K562 (cell line): ENCODE measurements at regions of chr6 and their contacts with region 1.

Region 1: DNA sequence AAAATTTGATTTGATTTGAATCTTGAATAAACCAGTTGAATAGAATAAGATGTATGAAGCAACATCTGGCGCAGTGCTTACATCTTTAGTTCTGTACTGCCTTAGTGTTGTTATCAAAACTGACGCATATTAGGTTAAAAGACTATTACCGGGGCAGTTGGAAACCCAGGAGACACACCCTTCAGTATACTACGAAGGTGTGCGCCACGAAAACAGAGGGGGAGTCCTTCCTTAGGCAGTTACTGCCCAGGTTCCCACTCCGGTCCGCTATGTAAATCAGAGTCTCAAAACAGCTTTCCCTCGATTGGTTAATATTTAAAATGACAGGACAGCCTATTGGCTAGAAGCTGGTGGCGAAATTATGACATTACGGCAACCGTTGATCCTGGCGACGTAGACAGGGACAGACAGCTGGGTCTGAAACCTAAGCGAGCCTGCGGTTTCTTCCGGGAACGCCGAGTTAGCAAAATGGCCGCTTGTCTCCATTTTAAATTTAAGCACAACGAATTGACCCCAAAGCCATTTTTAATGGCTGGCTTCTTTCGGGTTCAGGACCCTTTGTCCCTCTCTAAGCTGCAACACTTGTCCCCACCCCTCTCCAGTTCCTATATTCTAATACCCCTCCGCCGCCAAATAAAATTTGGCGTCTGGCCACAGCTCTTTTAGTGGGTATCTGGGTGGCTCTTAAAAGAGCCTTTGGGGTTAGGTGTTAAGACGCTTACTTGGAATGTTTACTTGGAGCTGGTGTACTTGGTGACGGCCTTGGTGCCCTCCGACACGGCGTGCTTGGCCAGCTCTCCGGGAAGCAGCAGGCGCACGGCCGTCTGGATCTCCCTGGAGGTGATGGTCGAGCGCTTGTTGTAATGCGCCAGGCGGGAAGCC is 35.8 kb downstream of the HFE start:
- DNase-seq: peak; percentile 79 to 99 (median 86)
- ATAC-seq: peak; percentile 62
- H3K4me3 ChIP-seq: peak overlapping the region; percentile 72
- H3K27ac ChIP-seq: peak overlapping the region; percentile 95
- H3K4me1 ChIP-seq: peaks cover 3 to 7% of the 10 kb centered on the region in 2 experiments; a peak in 4 of 5 replicates
- H3K27me3 ChIP-seq: no peaks in the 10 kb centered on the region
- CTCF ChIP-seq: peak in 1 of 3 experiments; percentile 23; a peak in 1 of 6 replicates
- EP300 ChIP-seq: peak; percentile 99
- POLR2A ChIP-seq: no peak; the same call in none of the 2 replicates
- RAD21 ChIP-seq: 0 out of 4 replicates have a peak, but pooled peaks of 1 of the 2 experiments have one; percentile 6

Region 2: DNA sequence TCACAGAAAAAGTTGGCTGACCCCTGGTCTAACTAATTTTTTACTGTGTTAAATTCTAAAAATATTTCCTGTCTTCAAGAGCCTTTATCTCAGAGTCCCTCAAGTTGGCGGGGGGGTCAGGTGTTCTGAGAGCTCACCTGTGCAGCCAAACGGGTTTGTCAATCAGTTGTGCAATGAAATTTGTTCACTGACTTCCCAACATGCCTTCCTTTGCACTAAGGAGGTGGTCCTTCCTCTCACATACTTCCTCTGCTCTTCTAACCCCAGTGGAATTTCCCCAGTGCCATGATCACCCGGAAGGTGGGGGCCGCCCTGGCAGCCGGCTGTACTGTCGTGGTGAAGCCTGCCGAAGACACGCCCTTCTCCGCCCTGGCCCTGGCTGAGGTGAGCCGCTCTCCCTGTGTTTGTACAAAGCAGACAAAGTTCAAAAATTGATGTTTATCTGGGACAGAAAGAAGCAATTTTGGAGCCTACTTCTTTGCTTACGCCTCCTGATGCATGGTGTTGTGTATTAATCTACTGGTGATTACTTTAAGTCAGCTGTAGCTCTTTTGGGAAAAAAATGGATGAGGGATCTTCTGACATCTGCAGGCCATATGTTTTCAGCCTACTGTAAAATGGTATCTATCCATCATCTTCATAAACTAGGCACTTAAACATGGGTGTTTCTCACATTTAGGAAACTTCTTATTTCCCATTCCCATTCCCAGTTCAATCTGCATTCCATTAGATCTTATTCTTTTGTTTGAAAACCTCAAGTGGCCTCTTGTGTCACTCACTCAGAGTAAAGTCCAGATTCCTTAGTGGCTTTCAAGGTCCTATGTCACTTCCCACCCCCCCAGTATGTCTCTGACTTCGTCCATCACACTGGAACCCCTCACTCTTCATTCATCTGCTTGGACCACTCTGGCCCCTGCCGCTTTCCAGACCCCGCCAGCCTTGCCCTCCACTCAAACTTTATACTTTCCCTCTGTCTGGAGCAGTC is 1618.1 kb before region 1 on chr6:
- CTCF ChIA-PET with region 1: no interaction called
- POLR2A ChIA-PET with region 1: no interaction called
- in situ Hi-C with region 1: no loop called
- intact Hi-C with region 1: no loop called
- DNase-seq: no peak
- ATAC-seq: no peak; the same call in 2 of the 3 replicates
- H3K4me3 ChIP-seq: no peak overlapping the region
- H3K27ac ChIP-seq: no peak overlapping the region
- H3K4me1 ChIP-seq: peaks cover 0 to 3% of the 10 kb centered on the region in 2 experiments; a peak in 2 of 5 replicates
- H3K27me3 ChIP-seq: no peaks in the 10 kb centered on the region; a peak in 2 of 5 replicates
- CTCF ChIP-seq: no peak
- EP300 ChIP-seq: no peak
- POLR2A ChIP-seq: no peak
- RAD21 ChIP-seq: no peak

Region 3: GRCh38 chr6:26065952-26066380 is 57.1 kb before region 1 on chr6:
- CTCF ChIA-PET with region 1: interaction called, 4 read pairs
- POLR2A ChIA-PET with region 1: interaction called, 23 read pairs
- in situ Hi-C with region 1: no loop called
- intact Hi-C with region 1: loop called (anchors 2 kb)
- DNase-seq: peak; percentile 80 to 91 (median 84)
- ATAC-seq: peak; percentile 91
- H3K4me3 ChIP-seq: no peak overlapping the region
- H3K27ac ChIP-seq: peak overlapping the region; percentile 70
- H3K4me1 ChIP-seq: peaks cover under 1 to 6% of the 10 kb centered on the region in 2 experiments; a peak in 2 of 5 replicates
- H3K27me3 ChIP-seq: no peaks in the 10 kb centered on the region
- CTCF ChIP-seq: peak; percentile 89 to 98 (median 93)
- EP300 ChIP-seq: peak; percentile 32; the same call in 1 of the 2 replicates
- POLR2A ChIP-seq: no peak
- RAD21 ChIP-seq: peak; percentile 99

Region 4: DNA sequence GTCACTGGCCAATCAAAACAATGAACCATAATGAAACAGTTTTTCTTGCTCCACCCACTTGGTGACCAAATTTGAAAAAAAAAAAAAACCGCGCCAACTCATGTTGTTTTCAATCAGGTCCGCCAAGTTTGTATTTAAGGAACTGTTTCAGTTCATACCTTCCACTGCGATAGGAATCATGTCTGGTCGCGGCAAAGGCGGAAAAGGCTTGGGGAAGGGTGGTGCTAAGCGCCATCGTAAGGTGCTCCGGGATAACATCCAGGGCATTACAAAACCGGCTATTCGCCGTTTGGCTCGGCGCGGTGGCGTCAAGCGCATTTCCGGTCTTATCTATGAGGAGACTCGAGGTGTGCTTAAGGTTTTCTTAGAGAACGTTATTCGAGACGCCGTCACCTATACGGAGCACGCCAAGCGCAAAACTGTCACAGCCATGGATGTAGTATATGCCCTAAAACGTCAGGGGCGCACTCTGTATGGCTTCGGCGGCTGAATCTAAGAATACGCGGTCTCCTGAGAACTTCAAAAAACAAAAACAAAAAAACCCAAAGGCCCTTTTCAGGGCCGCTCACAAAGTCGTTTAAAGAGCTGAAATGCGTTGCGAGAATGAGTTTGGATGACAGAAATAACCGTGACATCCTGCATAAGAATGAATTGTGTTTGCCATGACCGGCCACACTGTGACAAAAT is 19.1 kb before region 1 on chr6:
- CTCF ChIA-PET with region 1: interaction called, 3 read pairs
- POLR2A ChIA-PET with region 1: interaction called, 155 read pairs
- in situ Hi-C with region 1: no loop called
- intact Hi-C with region 1: loop called (anchors 1 kb)
- DNase-seq: peak; percentile 78 to 98 (median 86)
- ATAC-seq: peak; percentile 91
- H3K4me3 ChIP-seq: peak overlapping the region; percentile 30
- H3K27ac ChIP-seq: peak overlapping the region; percentile 92
- H3K4me1 ChIP-seq: peaks cover 3 to 20% of the 10 kb centered on the region in 2 experiments; a peak in 3 of 5 replicates
- H3K27me3 ChIP-seq: no peaks in the 10 kb centered on the region
- CTCF ChIP-seq: peak; percentile 53 to 71 (median 61)
- EP300 ChIP-seq: peak; percentile 96
- POLR2A ChIP-seq: peak; percentile 100
- RAD21 ChIP-seq: peak; percentile 29 to 46; a peak in 3 of 4 replicates

Region 5: DNA sequence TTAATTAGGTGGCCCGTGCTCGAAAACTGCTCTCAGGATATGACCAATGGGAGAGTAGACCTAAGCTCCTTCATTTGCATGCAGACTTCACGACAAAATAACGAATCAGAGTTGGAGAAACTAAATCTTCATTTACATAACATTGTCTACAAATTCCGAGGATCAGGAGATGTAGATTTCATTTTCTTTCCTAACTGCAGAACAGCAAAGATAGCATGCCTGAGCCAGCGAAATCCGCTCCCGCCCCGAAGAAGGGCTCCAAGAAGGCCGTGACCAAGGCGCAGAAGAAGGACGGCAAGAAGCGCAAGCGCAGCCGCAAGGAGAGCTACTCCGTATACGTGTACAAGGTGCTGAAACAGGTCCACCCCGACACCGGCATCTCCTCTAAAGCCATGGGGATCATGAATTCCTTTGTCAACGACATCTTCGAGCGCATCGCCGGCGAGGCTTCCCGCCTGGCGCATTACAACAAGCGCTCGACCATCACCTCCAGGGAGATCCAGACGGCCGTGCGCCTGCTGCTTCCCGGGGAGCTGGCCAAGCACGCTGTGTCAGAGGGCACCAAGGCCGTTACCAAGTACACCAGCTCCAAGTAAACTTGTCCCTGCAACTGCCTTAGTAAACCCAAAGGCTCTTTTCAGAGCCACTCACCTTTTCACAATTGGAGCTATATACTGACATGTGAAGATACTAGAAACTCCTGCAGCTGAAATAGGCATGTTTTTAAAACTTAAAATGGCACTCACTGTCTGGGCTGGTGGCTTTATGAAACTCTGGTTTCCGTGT is 60.7 kb after region 1 on chr6:
- CTCF ChIA-PET with region 1: no interaction called
- POLR2A ChIA-PET with region 1: interaction called, 84 read pairs
- in situ Hi-C with region 1: no loop called
- intact Hi-C with region 1: no loop called
- DNase-seq: no peak
- ATAC-seq: no peak
- H3K4me3 ChIP-seq: no peak overlapping the region
- H3K27ac ChIP-seq: no peak overlapping the region
- H3K4me1 ChIP-seq: peaks cover 0 to 18% of the 10 kb centered on the region in 2 experiments; a peak in 4 of 5 replicates
- H3K27me3 ChIP-seq: no peaks in the 10 kb centered on the region
- CTCF ChIP-seq: no peak
- EP300 ChIP-seq: no peak
- POLR2A ChIP-seq: no peak
- RAD21 ChIP-seq: no peak

Region 6: DNA sequence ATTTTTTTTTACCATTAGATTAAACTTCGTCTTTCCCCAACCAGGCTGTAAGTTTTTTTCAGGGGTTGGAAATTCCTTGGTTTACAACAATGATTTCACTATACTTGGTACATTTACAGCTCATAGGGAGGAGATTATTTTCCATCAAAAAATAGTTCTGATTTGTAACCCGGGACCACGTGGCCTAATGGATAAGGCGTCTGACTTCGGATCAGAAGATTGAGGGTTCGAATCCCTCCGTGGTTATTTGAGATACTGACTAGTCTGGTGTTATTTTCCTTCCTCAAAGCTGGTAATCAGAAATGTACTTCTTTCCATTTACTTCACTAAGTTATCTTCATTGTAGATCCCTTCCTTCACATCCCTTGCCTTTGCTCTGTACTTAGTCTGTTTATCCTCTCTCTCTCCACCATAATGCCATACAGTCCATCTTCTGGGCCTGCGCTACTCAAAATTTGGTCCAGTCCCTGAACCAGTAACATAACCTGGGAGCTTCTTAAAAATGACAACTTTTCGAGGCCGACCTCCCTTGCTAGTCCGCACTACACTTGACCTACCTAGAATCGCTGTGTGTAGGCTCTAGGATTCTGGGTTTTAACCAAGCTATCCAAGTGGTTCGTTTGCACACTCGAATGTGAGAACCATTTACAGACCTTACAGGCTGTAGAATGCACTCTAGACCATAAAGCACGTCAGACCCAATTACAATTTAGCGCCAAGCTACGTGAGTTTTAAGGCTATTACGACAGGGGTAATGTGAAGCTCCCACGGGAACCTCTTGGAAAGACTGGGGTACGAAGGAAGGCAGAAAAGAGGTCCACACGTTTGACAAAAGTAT is 199.8 kb after region 1 on chr6:
- CTCF ChIA-PET with region 1: no interaction called
- POLR2A ChIA-PET with region 1: interaction called, 12 read pairs
- in situ Hi-C with region 1: no loop called
- intact Hi-C with region 1: no loop called
- DNase-seq: peak in 3 of 4 experiments; percentile 43 to 96 (median 81)
- ATAC-seq: peak; percentile 62
- H3K4me3 ChIP-seq: peak overlapping the region; percentile 59
- H3K27ac ChIP-seq: peak overlapping the region; percentile 75
- H3K4me1 ChIP-seq: peaks cover 8 to 24% of the 10 kb centered on the region in 2 experiments
- H3K27me3 ChIP-seq: no peaks in the 10 kb centered on the region
- CTCF ChIP-seq: no peak
- EP300 ChIP-seq: peak; percentile 54
- POLR2A ChIP-seq: no peak
- RAD21 ChIP-seq: peak in 1 of 2 experiments; percentile 27; a peak in 1 of 4 replicates